ENCODE measurements at regions of chr3 and their contacts with region 1.

Region 1: DNA sequence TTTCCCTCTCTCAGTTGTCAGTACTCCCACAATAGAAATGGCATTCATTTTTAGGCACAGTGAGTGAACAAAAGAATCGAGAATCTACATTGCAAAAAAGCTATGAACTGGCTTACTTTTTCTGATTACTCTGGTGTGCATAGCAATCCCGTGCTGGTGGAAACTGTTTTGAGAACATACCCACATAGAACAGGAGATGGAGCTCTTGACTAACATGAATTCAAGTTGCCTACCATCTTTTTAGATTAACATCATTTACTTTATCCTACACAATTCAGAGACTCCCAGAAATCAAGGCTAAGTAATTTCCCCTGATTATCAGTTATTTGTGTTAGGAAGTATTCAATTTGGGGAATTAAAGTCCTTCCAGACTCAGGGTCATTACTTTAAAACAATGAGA is 326.6 kb downstream of the ARPP21 start:
- DNase-seq: peak; percentile 38
- H3K4me3 ChIP-seq: no peak overlapping the region
- H3K27ac ChIP-seq: no peak overlapping the region
- H3K4me1 ChIP-seq: no peaks in the 10 kb centered on the region
- H3K27me3 ChIP-seq: peaks cover 2 to 7% of the 10 kb centered on the region in 2 experiments
- CTCF ChIP-seq: peak; percentile 17 to 23
- POLR2A ChIP-seq: no peak

Region 2: GRCh38 chr3:35946121-35946853 is 19.6 kb before region 1 on chr3:
- CTCF ChIA-PET with region 1: interaction called, 22 read pairs
- POLR2A ChIA-PET with region 1: no interaction called
- dilution Hi-C with region 1: no loop called
- intact Hi-C with region 1: no loop called
- DNase-seq: peak; percentile 59
- H3K4me3 ChIP-seq: no peak overlapping the region
- H3K27ac ChIP-seq: no peak overlapping the region
- H3K4me1 ChIP-seq: peaks cover 10% of the 10 kb centered on the region
- H3K27me3 ChIP-seq: peaks cover 5 to 11% of the 10 kb centered on the region in 2 experiments
- CTCF ChIP-seq: peak; percentile 20 to 50
- POLR2A ChIP-seq: no peak

Region 3: DNA sequence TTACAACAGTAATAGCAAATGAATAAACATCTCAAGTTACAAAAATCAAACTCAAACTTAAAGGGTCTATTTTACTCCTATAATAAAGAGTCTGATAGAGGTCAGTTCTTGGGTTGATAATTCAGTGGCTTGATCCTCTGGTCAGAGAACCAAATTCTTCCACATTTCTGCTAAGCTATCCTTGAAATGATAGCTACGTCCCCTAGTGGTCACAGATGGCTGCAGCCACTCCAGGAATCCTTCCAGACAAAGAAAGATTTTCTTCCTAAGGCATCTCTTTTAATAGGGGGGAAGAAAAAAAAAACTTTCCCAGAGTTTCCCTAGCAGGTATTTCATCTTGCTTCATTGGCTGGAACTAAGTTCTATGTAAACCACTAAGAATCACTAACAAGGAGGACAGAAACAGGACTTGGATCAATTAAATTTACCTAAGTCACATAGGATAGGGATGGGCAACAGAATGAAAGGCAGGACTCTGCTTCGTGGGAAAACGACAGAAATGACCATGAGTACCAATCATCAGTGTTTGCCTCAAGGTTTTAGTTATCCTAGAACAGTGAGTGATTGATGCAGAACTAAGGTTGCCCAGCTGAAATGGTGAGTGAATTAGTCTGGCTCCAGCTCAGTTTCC is 575.1 kb after region 1 on chr3:
- CTCF ChIA-PET with region 1: interaction called, 14 read pairs
- POLR2A ChIA-PET with region 1: no interaction called
- dilution Hi-C with region 1: no loop called
- intact Hi-C with region 1: loop called (anchors 1 kb)
- DNase-seq: no peak
- H3K4me3 ChIP-seq: no peak overlapping the region
- H3K27ac ChIP-seq: no peak overlapping the region
- H3K4me1 ChIP-seq: no peaks in the 10 kb centered on the region
- H3K27me3 ChIP-seq: no peaks in the 10 kb centered on the region
- CTCF ChIP-seq: peak; percentile 14 to 37
- POLR2A ChIP-seq: no peak

Region 4: GRCh38 chr3:36700537-36701248 is 734.8 kb after region 1 on chr3:
- CTCF ChIA-PET with region 1: interaction called, 29 read pairs
- POLR2A ChIA-PET with region 1: no interaction called
- dilution Hi-C with region 1: no loop called
- intact Hi-C with region 1: loop called (anchors 1 kb)
- DNase-seq: peak; percentile 52
- H3K4me3 ChIP-seq: no peak overlapping the region
- H3K27ac ChIP-seq: no peak overlapping the region
- H3K4me1 ChIP-seq: no peaks in the 10 kb centered on the region
- H3K27me3 ChIP-seq: no peaks in the 10 kb centered on the region
- CTCF ChIP-seq: peak; percentile 72 to 76
- POLR2A ChIP-seq: no peak

Measured in endothelial cell of umbilical vein (primary cell).